Ovary (tissue), 10 donors: ENCODE measurements at regions of chr1 and their contacts with region 1.

Region 1: DNA sequence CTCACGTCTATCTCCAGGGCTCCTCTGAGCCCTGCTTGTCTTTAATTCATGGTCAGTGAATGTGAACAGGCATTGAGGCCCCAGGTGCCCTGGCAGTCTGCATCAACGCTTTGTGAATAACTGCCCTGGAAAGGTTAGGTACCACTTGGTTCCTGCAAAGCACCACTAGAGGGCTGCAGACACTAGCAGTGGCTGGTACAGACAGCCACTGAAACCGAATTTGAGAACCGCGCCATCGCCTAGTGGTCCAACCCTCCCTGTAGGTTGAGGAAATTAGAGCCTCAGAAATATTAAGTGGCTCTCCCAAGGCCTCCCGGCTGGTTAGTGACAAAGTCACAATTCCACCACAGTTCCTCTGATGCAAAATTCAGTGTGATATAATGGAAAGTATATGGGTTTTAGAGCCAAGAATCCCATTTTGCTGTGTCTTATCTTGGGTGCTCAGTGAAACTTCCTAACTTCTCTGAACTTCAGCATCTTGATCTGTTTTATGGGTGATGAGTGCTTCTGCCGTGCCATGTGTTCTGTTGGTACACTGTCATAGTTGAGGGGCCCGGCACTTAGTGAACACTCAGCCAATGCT is 46.2 kb upstream of the BCL9 start:
- DNase-seq: peak; percentile 71 to 83 (median 78)
- H3K4me3 ChIP-seq: no peak overlapping the region
- H3K27ac ChIP-seq: no peak overlapping the region
- H3K4me1 ChIP-seq: peaks cover 5% of the 10 kb centered on the region
- H3K27me3 ChIP-seq: no peaks in the 10 kb centered on the region
- CTCF ChIP-seq: peak; percentile 77 to 90 (median 84)
- EP300 ChIP-seq: no peak
- POLR2A ChIP-seq: no peak

Region 2: GRCh38 chr1:147627435-147628110 is 132.5 kb after region 1 on chr1:
- intact Hi-C with region 1: loop called (anchors 2 to 5 kb)
- DNase-seq: peak; percentile 45 to 59 (median 48)
- H3K4me3 ChIP-seq: no peak overlapping the region
- H3K27ac ChIP-seq: no peak overlapping the region
- H3K4me1 ChIP-seq: peaks cover 4% of the 10 kb centered on the region
- H3K27me3 ChIP-seq: no peaks in the 10 kb centered on the region
- CTCF ChIP-seq: peak; percentile 69 to 79 (median 74)
- EP300 ChIP-seq: no peak
- POLR2A ChIP-seq: no peak